Dorsolateral prefrontal cortex (tissue), 120 donors: ENCODE measurements at regions of chr1 and their contacts with region 1.

Region 1: GRCh38 chr1:114716304-114717170 is at the start of gene NRAS:
- DNase-seq: peak; percentile 75 to 96 (median 93)
- H3K4me3 ChIP-seq: peak within 1 kb of the TSS; percentile 64 to 100 (median 91)
- H3K27ac ChIP-seq: peak within 1 kb of the TSS in 56 of 59 donors; percentile 20 to 94 (median 80)
- H3K27me3 ChIP-seq: no peaks in the 10 kb centered on the region
- CTCF ChIP-seq: peak in 29 of 56 donors; percentile 5 to 44 (median 22)
- total RNA-seq, gene NRAS: 10.6 to 20.9 (median 16.0) TPM

Region 2: DNA sequence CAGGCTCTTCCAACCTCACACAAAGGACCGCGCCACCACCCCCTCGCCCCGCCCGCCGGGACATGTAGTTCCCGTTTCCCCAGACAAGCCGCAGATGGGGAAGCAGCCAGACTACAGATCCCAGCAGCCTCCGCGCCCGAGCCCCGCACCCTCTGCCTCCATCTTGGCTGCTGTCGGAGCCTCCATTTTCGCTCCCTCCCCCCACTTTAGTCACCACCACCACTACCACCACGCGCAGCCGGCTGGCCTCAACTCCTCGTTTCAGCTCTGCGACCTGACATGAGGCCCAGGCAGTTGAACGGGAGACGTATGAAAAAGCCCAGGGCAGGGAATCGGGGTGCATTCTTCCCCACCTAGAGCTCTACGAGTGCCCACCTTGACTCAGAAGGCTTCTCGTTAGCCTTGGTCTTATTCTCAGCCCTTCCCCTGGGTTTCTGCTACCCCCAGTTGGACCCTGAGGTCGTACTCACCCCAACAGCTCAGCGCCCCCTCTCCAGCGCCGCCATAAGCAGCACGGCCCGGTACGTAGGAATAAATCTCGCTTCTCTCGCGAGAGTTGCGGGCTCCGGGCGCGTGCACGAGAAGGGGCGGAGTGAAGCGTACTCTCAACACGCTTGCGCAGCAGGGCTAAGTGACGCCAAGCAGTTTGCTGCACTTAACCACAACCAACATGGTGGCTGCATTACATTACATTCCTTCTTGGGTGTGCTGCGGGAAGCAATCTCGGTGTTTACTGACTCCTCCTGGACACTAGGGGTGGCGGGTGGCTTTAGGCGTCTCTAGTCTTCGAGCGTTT is 41.1 kb after region 1 on chr1 and contains the start of gene CSDE1:
- intact Hi-C with region 1: loop called (anchors 1 to 2 kb)
- DNase-seq: peak; percentile 93 to 98 (median 96)
- H3K4me3 ChIP-seq: peak within 1 kb of the TSS; percentile 66 to 100 (median 95)
- H3K27ac ChIP-seq: peak within 1 kb of the TSS; percentile 95 to 100 (median 99)
- H3K27me3 ChIP-seq: no peaks in the 10 kb centered on the region
- CTCF ChIP-seq: peak in 41 of 56 donors; percentile 3 to 50 (median 27)
- total RNA-seq, gene CSDE1: 340 to 487 (median 404) TPM

Region 3: GRCh38 chr1:114780344-114781226 is 64.0 kb after region 1 on chr1 and contains the start of gene SIKE1:
- intact Hi-C with region 1: loop called in 1 of 2 experiments (anchors 1 kb)
- DNase-seq: peak; percentile 84 to 97 (median 94)
- H3K4me3 ChIP-seq: peak within 1 kb of the TSS; percentile 53 to 99 (median 89)
- H3K27ac ChIP-seq: peak within 1 kb of the TSS; percentile 13 to 94 (median 79)
- H3K27me3 ChIP-seq: peaks cover 0 to 6% (median 0%) of the 10 kb centered on the region in 45 donors
- CTCF ChIP-seq: peak in 28 of 56 donors; percentile 10 to 47 (median 28)
- total RNA-seq, gene SIKE1: 19.8 to 45.5 (median 30.5) TPM

Region 4: GRCh38 chr1:114997510-114998289 is 281.2 kb after region 1 on chr1:
- intact Hi-C with region 1: no loop called
- DNase-seq: no peak
- H3K4me3 ChIP-seq: no peak overlapping the region
- H3K27ac ChIP-seq: no peak overlapping the region
- H3K27me3 ChIP-seq: no peaks in the 10 kb centered on the region
- CTCF ChIP-seq: no peak